ENCODE measurements at regions of chr6 and their contacts with region 1.

Region 1: GRCh38 chr6:149963462-149964307 is at the start of gene ULBP1:
- DNase-seq: peak; percentile 48 to 86 (median 58)
- ATAC-seq: peak; percentile 79
- H3K4me3 ChIP-seq: peak within 1 kb of the TSS; percentile 66
- H3K4me3 Mint-ChIP-seq: peak within 1 kb of the TSS; percentile 88 to 97 (median 92)
- H3K27ac ChIP-seq: no peak within 1 kb of the TSS
- H3K27ac Mint-ChIP-seq: peak within 1 kb of the TSS in 8 of 9 donors; percentile 15 to 92 (median 74)
- H3K4me1 ChIP-seq: peaks cover 8 to 24% of the 10 kb centered on the region in 2 donors
- H3K4me1 Mint-ChIP-seq: peaks cover 14 to 28% (median 23%) of the 10 kb centered on the region in 7 donors
- H3K27me3 ChIP-seq: peaks cover 12 to 36% of the 10 kb centered on the region in 2 donors
- H3K27me3 Mint-ChIP-seq: peaks cover 72 to 90% (median 87%) of the 10 kb centered on the region in 5 donors
- total RNA-seq, gene ULBP1: 1.4 TPM in 1 of 5 experiments, not detected in the others

Region 2: DNA sequence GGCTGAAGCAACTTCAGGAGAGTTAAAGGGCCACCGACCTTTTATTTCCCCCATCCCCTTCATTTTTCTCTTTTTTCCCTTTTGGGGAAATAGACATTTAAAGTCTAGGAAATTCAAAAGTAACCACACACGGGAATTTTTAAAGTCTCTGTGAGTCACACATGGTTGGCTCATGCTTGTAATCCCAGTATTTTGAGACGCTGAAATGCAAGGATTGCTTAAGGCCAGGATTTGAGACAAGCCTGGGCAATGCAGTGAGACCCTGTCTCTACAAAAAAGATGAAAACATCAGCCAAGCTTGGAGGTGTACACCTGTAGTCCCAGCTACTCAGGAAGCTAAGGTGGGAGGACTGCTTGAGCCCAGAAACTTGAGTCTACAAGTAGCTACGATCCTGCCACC is 349.3 kb before region 1 on chr6:
- CTCF ChIA-PET with region 1: no interaction called
- POLR2A ChIA-PET with region 1: no interaction called
- intact Hi-C with region 1: no loop called
- DNase-seq: no peak
- ATAC-seq: no peak
- H3K4me3 ChIP-seq: no peak overlapping the region
- H3K4me3 Mint-ChIP-seq: no peak overlapping the region
- H3K27ac ChIP-seq: no peak overlapping the region
- H3K27ac Mint-ChIP-seq: no peak overlapping the region
- H3K4me1 ChIP-seq: no peaks in the 10 kb centered on the region
- H3K4me1 Mint-ChIP-seq: peaks cover 8 to 21% (median 10%) of the 10 kb centered on the region in 7 donors
- H3K27me3 ChIP-seq: no peaks in the 10 kb centered on the region
- H3K27me3 Mint-ChIP-seq: no peaks in the 10 kb centered on the region

Region 3: GRCh38 chr6:149648148-149649145 is 315.2 kb before region 1 on chr6 and contains the start of gene KATNA1:
- CTCF ChIA-PET with region 1: no interaction called
- POLR2A ChIA-PET with region 1: no interaction called
- intact Hi-C with region 1: no loop called
- DNase-seq: peak; percentile 69 to 95 (median 81)
- ATAC-seq: peak; percentile 96
- H3K4me3 ChIP-seq: peak within 1 kb of the TSS; percentile 91
- H3K4me3 Mint-ChIP-seq: peak within 1 kb of the TSS; percentile 83 to 96 (median 91)
- H3K27ac ChIP-seq: peak within 1 kb of the TSS; percentile 82
- H3K27ac Mint-ChIP-seq: peak within 1 kb of the TSS; percentile 82 to 95 (median 90)
- H3K4me1 ChIP-seq: peaks cover 7 to 17% of the 10 kb centered on the region in 2 donors
- H3K4me1 Mint-ChIP-seq: peaks cover 2 to 41% (median 33%) of the 10 kb centered on the region in 7 donors
- H3K27me3 ChIP-seq: no peaks in the 10 kb centered on the region
- H3K27me3 Mint-ChIP-seq: no peaks in the 10 kb centered on the region
- total RNA-seq, gene KATNA1: 14.1 to 22.6 (median 16.7) TPM

Region 4: DNA sequence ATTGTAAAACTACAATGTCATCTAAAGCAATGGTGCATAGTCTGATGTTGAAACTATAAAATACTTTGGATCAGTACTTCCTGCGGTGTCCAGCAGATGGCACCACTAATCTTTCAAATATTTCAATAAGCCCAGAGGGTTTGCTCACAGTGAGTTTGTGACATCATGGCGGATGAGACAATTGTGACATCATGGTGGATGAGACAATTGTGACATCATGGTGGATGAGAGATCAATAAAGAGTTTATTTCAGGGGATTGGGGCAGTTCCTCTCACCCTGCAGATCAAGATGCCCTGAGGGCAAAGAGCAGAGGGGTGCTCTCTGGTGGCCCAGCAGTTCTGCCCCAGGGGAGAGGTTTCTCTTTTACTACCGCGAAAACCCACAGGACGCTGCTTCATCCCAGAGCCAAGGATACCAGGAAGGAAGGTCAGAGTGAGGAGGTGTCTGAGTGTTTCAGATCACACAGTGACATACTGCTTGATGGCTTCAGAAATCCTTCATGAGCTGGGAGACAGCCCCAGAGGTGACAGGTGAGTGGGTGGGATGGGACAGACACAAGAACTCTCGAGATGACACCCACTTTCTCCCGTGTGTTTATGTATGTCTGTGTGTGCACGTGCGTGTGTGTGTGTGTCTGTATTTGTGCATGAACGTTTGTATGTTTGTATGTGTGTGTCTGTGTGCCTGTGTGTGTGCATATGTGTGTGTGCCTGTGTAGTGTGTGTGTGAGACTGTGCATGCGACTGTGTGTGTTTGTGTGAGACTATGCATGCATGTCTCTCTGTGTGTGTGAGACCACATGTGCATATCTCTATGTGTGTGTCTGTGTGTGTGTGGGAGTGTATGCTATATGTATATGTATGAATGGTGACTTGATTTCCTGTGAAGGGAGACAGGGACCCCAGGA is 29.2 kb before region 1 on chr6:
- CTCF ChIA-PET with region 1: no interaction called
- POLR2A ChIA-PET with region 1: no interaction called
- intact Hi-C with region 1: loop called in 1 of 2 experiments (anchors 1 kb)
- DNase-seq: peak in 8 of 9 donors; percentile 50 to 76 (median 70)
- ATAC-seq: peak; percentile 76
- H3K4me3 ChIP-seq: no peak overlapping the region
- H3K4me3 Mint-ChIP-seq: peak overlapping the region in 1 of 10 donors; percentile 41
- H3K27ac ChIP-seq: no peak overlapping the region
- H3K27ac Mint-ChIP-seq: peak overlapping the region in 4 of 9 donors; percentile 2 to 39 (median 28)
- H3K4me1 ChIP-seq: peaks cover 12 to 14% of the 10 kb centered on the region in 2 donors
- H3K4me1 Mint-ChIP-seq: peaks cover 6 to 28% (median 19%) of the 10 kb centered on the region in 7 donors
- H3K27me3 ChIP-seq: peaks cover 26 to 58% of the 10 kb centered on the region in 2 donors
- H3K27me3 Mint-ChIP-seq: peaks cover 81 to 91% (median 87%) of the 10 kb centered on the region in 5 donors

Region 5: GRCh38 chr6:149941583-149942431 is 21.9 kb before region 1 on chr6 and contains the start of gene ULBP2:
- CTCF ChIA-PET with region 1: no interaction called
- POLR2A ChIA-PET with region 1: no interaction called
- intact Hi-C with region 1: loop called (anchors 1 kb)
- DNase-seq: peak; percentile 69 to 94 (median 80)
- ATAC-seq: peak; percentile 94
- H3K4me3 ChIP-seq: peak within 1 kb of the TSS; percentile 58
- H3K4me3 Mint-ChIP-seq: peak within 1 kb of the TSS; percentile 78 to 96 (median 94)
- H3K27ac ChIP-seq: peak within 1 kb of the TSS; percentile 9
- H3K27ac Mint-ChIP-seq: peak within 1 kb of the TSS; percentile 74 to 91 (median 85)
- H3K4me1 ChIP-seq: peaks cover 14 to 20% of the 10 kb centered on the region in 2 donors
- H3K4me1 Mint-ChIP-seq: peaks cover 13 to 40% (median 31%) of the 10 kb centered on the region in 7 donors
- H3K27me3 ChIP-seq: peaks cover 25 to 35% of the 10 kb centered on the region in 2 donors
- H3K27me3 Mint-ChIP-seq: peaks cover 31 to 82% (median 44%) of the 10 kb centered on the region in 5 donors
- total RNA-seq, gene ULBP2: 0.27 to 1.0 (median 0.65) TPM in 4 of 5 experiments, not detected in the other

Region 6: DNA sequence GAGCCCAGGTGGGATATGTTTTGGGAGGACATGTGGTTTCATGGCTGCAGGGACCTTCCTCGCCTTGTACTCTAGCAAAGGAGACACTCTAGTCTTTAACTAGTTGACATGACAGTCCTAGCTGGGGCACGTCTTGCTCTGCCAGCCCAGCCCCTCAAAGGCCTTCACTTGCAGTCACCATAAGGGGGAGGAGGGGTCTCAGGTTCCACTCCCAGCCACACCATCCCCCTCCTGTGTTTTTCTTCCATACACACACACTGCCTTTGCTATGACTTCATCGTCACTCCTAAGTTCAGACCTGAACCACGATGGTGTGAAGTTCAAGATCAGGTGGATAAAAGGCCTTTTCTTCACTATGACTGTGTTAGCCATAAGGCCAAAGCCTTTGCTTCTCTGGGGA is 13.5 kb after region 1 on chr6:
- CTCF ChIA-PET with region 1: no interaction called
- POLR2A ChIA-PET with region 1: no interaction called
- intact Hi-C with region 1: no loop called
- DNase-seq: no peak
- ATAC-seq: no peak
- H3K4me3 ChIP-seq: no peak overlapping the region
- H3K4me3 Mint-ChIP-seq: no peak overlapping the region
- H3K27ac ChIP-seq: no peak overlapping the region
- H3K27ac Mint-ChIP-seq: no peak overlapping the region
- H3K4me1 ChIP-seq: no peaks in the 10 kb centered on the region
- H3K4me1 Mint-ChIP-seq: peaks cover 0 to 12% (median 5%) of the 10 kb centered on the region in 7 donors
- H3K27me3 ChIP-seq: peaks cover 0 to 7% of the 10 kb centered on the region in 2 donors
- H3K27me3 Mint-ChIP-seq: peaks cover 79 to 89% (median 85%) of the 10 kb centered on the region in 5 donors

Region 7: GRCh38 chr6:149990618-149991471 is 27.2 kb after region 1 on chr6:
- CTCF ChIA-PET with region 1: no interaction called
- POLR2A ChIA-PET with region 1: no interaction called
- intact Hi-C with region 1: loop called (anchors 2 kb)
- DNase-seq: peak in 2 of 9 donors; percentile 23 to 27
- ATAC-seq: peak; percentile 58
- H3K4me3 ChIP-seq: peak overlapping the region; percentile 53
- H3K4me3 Mint-ChIP-seq: peak overlapping the region; percentile 66 to 95 (median 82)
- H3K27ac ChIP-seq: no peak overlapping the region
- H3K27ac Mint-ChIP-seq: peak overlapping the region in 1 of 9 donors; percentile 10
- H3K4me1 ChIP-seq: peaks cover 24 to 26% of the 10 kb centered on the region in 2 donors
- H3K4me1 Mint-ChIP-seq: peaks cover 25 to 38% (median 30%) of the 10 kb centered on the region in 7 donors
- H3K27me3 ChIP-seq: peaks cover 15 to 40% of the 10 kb centered on the region in 2 donors
- H3K27me3 Mint-ChIP-seq: peaks cover 90 to 97% (median 96%) of the 10 kb centered on the region in 5 donors

Region 8: GRCh38 chr6:150016324-150017185 is 52.9 kb after region 1 on chr6:
- CTCF ChIA-PET with region 1: no interaction called
- POLR2A ChIA-PET with region 1: no interaction called
- intact Hi-C with region 1: loop called in 1 of 2 experiments (anchors 2 kb)
- DNase-seq: peak in 8 of 9 donors; percentile 38 to 77 (median 68)
- ATAC-seq: peak; percentile 85
- H3K4me3 ChIP-seq: no peak overlapping the region
- H3K4me3 Mint-ChIP-seq: no peak overlapping the region
- H3K27ac ChIP-seq: no peak overlapping the region
- H3K27ac Mint-ChIP-seq: peak overlapping the region in 1 of 9 donors; percentile 1
- H3K4me1 ChIP-seq: peaks cover 0 to 2% of the 10 kb centered on the region in 2 donors
- H3K4me1 Mint-ChIP-seq: peaks cover 10 to 23% (median 15%) of the 10 kb centered on the region in 7 donors
- H3K27me3 ChIP-seq: peaks cover 11 to 16% of the 10 kb centered on the region in 2 donors
- H3K27me3 Mint-ChIP-seq: peaks cover 60 to 80% (median 66%) of the 10 kb centered on the region in 5 donors

Region 9: DNA sequence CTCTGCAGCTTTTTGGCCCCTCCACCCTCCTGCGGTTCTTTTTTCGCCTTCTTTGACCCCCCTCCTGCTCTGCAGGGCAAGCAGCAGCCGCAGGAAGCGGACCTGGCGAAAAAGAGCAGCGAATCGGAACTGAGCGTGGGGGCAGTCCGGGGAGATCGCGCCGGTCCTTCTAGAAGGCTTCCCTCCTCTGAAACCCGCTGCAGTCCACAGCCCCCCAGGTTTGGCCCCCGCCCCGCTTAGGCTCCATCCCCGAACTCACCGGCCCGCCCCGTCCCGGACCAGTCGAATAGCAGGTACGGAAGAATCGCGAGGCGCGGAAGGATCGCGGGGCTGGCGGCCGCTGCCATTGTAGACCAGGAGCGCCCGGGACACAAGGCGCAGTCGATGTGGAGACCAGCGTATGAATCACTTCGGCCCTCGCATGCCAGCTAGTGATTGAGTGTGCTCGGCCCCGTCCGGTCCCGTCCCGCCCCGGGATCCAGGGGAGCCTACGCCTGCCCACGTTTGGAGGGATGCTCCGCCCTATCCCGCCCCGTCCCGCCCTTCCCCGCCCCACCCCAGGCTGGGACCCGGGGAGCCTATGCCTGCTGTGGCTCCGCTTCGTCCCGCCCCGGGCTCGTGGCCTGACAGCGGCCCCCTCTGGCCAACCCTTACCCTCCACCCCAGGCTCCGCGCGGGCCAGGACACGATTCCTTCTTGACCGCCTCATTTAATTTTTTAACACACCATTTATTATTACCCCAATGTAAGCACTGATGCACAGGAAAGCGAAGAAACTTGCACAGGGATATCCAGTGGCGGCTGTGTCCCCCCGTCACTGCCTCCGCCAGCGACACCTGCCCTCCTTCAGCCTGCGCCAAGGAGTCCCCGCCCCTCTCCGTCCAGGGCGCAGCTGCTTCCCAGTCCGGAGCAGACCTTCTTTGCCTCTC is 105.3 kb after region 1 on chr6 and contains the start of gene ULBP3:
- CTCF ChIA-PET with region 1: no interaction called
- POLR2A ChIA-PET with region 1: no interaction called
- intact Hi-C with region 1: loop called in 1 of 2 experiments (anchors 2 kb)
- DNase-seq: peak; percentile 24 to 75 (median 35)
- ATAC-seq: peak; percentile 83
- H3K4me3 ChIP-seq: peak within 1 kb of the TSS; percentile 77
- H3K4me3 Mint-ChIP-seq: peak within 1 kb of the TSS; percentile 80 to 95 (median 90)
- H3K27ac ChIP-seq: no peak within 1 kb of the TSS
- H3K27ac Mint-ChIP-seq: peak within 1 kb of the TSS in 4 of 9 donors; percentile 49 to 82 (median 72)
- H3K4me1 ChIP-seq: peaks cover 0 to 5% of the 10 kb centered on the region in 2 donors
- H3K4me1 Mint-ChIP-seq: peaks cover 10 to 22% (median 14%) of the 10 kb centered on the region in 7 donors
- H3K27me3 ChIP-seq: no peaks in the 10 kb centered on the region
- H3K27me3 Mint-ChIP-seq: peaks cover 4 to 35% (median 12%) of the 10 kb centered on the region in 5 donors
- total RNA-seq, gene ULBP3: 0.42 to 1.5 TPM in 2 of 5 experiments, not detected in the others

Region 10: GRCh38 chr6:150129616-150130422 is 166.1 kb after region 1 on chr6:
- CTCF ChIA-PET with region 1: no interaction called
- POLR2A ChIA-PET with region 1: no interaction called
- intact Hi-C with region 1: no loop called
- DNase-seq: no peak
- ATAC-seq: no peak
- H3K4me3 ChIP-seq: no peak overlapping the region
- H3K4me3 Mint-ChIP-seq: no peak overlapping the region
- H3K27ac ChIP-seq: no peak overlapping the region
- H3K27ac Mint-ChIP-seq: no peak overlapping the region
- H3K4me1 ChIP-seq: no peaks in the 10 kb centered on the region
- H3K4me1 Mint-ChIP-seq: no peaks in the 10 kb centered on the region
- H3K27me3 ChIP-seq: no peaks in the 10 kb centered on the region
- H3K27me3 Mint-ChIP-seq: peaks cover 4 to 14% (median 12%) of the 10 kb centered on the region in 5 donors